ENCODE measurements at regions of chr1 and their contacts with region 1.

Region 1: DNA sequence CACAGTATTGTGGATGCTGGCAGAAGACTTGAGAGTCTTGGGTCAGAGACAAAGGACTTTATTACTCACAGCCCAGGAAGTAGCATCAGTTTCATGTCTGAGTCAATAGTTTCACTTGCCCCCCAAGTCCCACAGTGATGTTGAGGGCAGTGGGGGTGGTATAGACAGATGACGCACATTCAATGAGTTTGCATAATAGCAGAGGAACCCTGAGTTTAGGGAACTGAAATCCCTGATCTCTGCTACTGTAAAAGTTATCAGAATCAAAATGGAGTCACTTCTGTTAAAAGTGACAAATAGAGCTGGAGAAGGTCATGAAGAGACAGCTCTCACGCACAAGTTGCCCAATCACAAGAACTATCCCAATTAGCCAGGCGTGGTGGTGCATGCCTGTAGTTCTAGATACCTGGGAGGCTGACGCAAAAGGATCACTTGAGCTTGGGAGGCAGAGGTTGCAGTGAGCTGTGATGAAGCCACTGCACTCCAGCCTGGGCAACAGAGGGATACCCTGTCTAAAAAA is 11.5 kb upstream of the HCRTR1 start:
- DNase-seq: peak; percentile 91 to 98 (median 94)
- H3K4me3 ChIP-seq: no peak overlapping the region
- H3K4me3 Mint-ChIP-seq: peak overlapping the region in 1 of 2 donors; percentile 36
- H3K27ac ChIP-seq: peak overlapping the region; percentile 56 to 80
- H3K27ac Mint-ChIP-seq: peak overlapping the region; percentile 85 to 95 (median 92)
- H3K4me1 ChIP-seq: peaks cover 12 to 13% of the 10 kb centered on the region in 2 donors
- H3K4me1 Mint-ChIP-seq: peaks cover 21% of the 10 kb centered on the region
- H3K27me3 ChIP-seq: no peaks in the 10 kb centered on the region
- H3K27me3 Mint-ChIP-seq: peaks cover 3 to 8% (median 3%) of the 10 kb centered on the region in 3 donors
- CTCF ChIP-seq: no peak

Region 2: DNA sequence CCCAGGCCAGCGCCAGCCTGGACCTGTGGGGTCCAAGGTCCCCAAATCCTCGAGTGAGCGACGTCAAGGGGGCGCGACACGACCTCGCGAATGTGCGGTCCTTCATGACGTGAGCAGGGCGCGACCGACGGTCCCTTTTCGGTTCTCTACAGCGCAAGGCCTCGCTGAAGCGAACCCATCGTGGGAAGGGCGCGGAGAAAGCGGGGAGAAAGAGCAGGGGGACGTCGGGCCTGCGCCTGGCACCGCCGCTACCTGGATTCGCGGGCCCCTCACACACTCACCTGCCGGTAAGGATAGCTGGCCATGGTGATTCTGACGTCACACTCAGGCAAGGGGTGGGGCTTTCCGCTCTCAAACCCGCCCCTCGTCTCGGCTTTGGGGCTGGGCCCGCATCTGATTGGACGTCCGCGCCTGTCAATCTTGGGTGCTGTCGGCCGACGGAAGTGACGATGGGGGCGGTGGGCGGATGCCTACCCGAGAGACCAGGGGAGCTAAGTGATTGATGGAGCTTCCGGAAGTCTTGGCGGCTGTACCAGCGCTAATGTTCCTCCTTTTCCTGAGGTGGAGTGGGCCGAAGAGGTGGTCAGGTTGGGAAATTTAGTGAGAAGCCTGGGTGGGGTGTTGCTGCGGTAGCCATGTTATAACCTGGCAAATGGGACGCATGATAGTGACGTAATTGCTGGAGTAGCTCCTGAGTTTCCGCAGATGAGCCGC is 38.7 kb after region 1 on chr1 and contains the start of gene PEF1:
- intact Hi-C with region 1: loop called in 1 of 2 experiments (anchors 5 kb)
- DNase-seq: peak; percentile 97 to 99 (median 98)
- H3K4me3 ChIP-seq: peak within 1 kb of the TSS; percentile 56 to 86 (median 75)
- H3K4me3 Mint-ChIP-seq: peak within 1 kb of the TSS; percentile 91 to 100
- H3K27ac ChIP-seq: peak within 1 kb of the TSS; percentile 91 to 100
- H3K27ac Mint-ChIP-seq: peak within 1 kb of the TSS; percentile 99 to 100 (median 100)
- H3K4me1 ChIP-seq: peaks cover 26 to 31% of the 10 kb centered on the region in 2 donors
- H3K4me1 Mint-ChIP-seq: peaks cover 21% of the 10 kb centered on the region
- H3K27me3 ChIP-seq: no peaks in the 10 kb centered on the region
- H3K27me3 Mint-ChIP-seq: no peaks in the 10 kb centered on the region
- CTCF ChIP-seq: no peak
- polyA plus RNA-seq, gene PEF1: 36.6 to 81.7 (median 70.7) TPM

Region 3: DNA sequence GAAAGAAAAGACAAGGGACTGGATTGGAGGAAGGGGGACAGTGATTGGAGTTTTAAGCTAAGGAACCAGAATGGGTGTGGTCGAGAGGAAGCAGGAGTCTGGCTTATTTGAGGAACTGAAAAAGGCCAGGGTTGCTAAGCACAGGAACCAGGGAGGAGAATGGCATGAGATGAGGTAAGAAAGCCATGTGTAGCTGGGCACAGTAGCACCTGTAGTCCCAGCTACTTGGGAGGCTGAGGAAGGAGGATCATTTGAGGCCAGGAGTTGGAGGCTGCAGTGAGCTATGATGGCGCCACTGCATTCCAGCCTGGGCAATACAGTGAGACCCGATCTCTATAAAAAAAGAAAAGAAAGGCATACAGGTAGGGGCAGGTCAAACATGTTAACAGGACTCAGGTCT is 399.6 kb after region 1 on chr1:
- intact Hi-C with region 1: no loop called
- DNase-seq: peak; percentile 66 to 87 (median 84)
- H3K4me3 ChIP-seq: peak overlapping the region in 1 of 3 experiments; percentile 3
- H3K4me3 Mint-ChIP-seq: peak overlapping the region in 1 of 2 donors; percentile 66
- H3K27ac ChIP-seq: peak overlapping the region in 1 of 2 donors; percentile 27
- H3K27ac Mint-ChIP-seq: peak overlapping the region; percentile 18 to 91 (median 81)
- H3K4me1 ChIP-seq: peaks cover 34 to 35% of the 10 kb centered on the region in 2 donors
- H3K4me1 Mint-ChIP-seq: peaks cover 33% of the 10 kb centered on the region
- H3K27me3 ChIP-seq: no peaks in the 10 kb centered on the region
- H3K27me3 Mint-ChIP-seq: peaks cover 0 to 3% (median 1%) of the 10 kb centered on the region in 3 donors
- CTCF ChIP-seq: no peak

Region 4: GRCh38 chr1:32020339-32020738 is 414.4 kb after region 1 on chr1:
- intact Hi-C with region 1: no loop called
- DNase-seq: peak in 1 of 3 donors; percentile 17
- H3K4me3 ChIP-seq: no peak overlapping the region
- H3K4me3 Mint-ChIP-seq: peak overlapping the region in 1 of 2 donors; percentile 42
- H3K27ac ChIP-seq: peak overlapping the region; percentile 46 to 65
- H3K27ac Mint-ChIP-seq: peak overlapping the region; percentile 66 to 86 (median 84)
- H3K4me1 ChIP-seq: peaks cover 35 to 54% of the 10 kb centered on the region in 2 donors
- H3K4me1 Mint-ChIP-seq: peaks cover 47% of the 10 kb centered on the region
- H3K27me3 ChIP-seq: no peaks in the 10 kb centered on the region
- H3K27me3 Mint-ChIP-seq: no peaks in the 10 kb centered on the region
- CTCF ChIP-seq: no peak